ENCODE measurements at regions of chr1 and their contacts with region 1.

Region 1: DNA sequence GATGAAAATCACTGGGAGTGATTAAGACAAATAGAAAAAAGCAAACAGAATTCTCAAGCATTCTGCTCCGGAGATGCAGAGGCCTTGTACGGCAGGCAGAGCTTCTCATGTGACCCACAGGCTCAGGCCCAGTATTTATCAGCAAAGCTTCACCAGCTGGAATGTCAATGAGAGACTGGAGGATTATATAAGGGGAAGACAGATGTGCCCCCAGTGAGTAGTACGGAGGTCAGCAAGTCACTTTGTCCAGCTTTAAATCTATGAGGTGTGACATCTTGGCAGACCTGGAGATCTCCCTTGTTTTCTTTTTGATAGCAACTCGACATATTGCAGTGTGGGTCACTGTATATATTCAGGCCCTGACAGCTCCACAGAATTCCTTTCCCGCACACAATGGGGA is 106.8 kb downstream of the HHIPL2 start:
- DNase-seq: no peak
- ATAC-seq: no peak
- H3K4me3 ChIP-seq: no peak overlapping the region
- H3K27ac ChIP-seq: no peak overlapping the region
- H3K4me1 ChIP-seq: no peaks in the 10 kb centered on the region
- H3K27me3 ChIP-seq: no peaks in the 10 kb centered on the region
- CTCF ChIP-seq: no peak
- POLR2A ChIP-seq: no peak

Region 2: DNA sequence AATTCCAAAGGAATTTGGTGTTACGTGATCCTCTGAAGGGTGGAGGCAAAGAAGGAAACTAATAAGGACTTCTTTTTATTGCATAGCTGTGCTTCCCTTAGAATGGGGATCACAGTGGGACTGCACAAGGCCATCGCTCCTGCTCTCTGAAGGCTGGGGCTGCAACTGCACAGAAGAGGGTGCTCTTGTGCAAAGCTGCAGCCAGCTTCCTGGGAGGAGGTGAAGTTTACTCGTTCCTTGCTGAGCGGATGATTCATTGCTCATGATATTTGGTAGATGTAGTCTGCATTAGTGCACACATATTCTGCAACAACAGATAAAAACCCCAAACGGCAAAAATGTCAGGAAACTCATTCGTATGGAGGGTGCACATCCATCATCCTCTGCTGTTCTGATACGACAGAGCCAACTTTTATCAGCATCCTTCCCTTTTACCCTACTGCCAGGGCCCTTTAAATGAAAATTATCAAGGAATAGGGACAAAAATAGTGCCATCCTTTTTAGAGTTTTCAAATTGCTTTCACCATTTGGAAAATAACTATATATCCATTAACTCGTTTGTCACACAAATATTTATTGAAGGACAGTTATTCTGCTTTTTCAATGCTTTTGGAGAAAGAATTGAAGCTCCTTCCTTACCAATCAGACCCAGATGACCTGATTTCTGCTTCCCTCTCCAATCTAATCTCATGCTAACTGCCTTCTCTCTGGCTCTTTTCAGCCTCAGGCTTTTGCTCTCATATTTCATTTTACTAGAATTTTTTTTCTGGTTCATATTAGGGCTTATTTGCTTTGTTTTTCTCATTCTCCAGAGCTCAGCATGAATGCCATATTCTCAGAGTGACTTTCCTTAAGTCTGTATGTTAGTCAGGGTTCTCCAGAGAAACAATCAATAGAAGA is 962.8 kb before region 1 on chr1:
- in situ Hi-C with region 1: loop called in 2 of 4 experiments (anchors 25 kb)
- intact Hi-C with region 1: no loop called
- DNase-seq: peak; percentile 22 to 25
- ATAC-seq: peak; percentile 78 to 82
- H3K4me3 ChIP-seq: no peak overlapping the region
- H3K27ac ChIP-seq: no peak overlapping the region
- H3K4me1 ChIP-seq: no peaks in the 10 kb centered on the region
- H3K27me3 ChIP-seq: no peaks in the 10 kb centered on the region
- CTCF ChIP-seq: peak in 2 of 5 experiments; percentile 31 to 64
- POLR2A ChIP-seq: no peak

Region 3: GRCh38 chr1:222617367-222617951 is 176.4 kb after region 1 on chr1:
- in situ Hi-C with region 1: no loop called
- intact Hi-C with region 1: no loop called
- DNase-seq: peak; percentile 80 to 82
- ATAC-seq: peak; percentile 91 to 93
- H3K4me3 ChIP-seq: peak overlapping the region; percentile 61 to 73 (median 68)
- H3K27ac ChIP-seq: peak overlapping the region; percentile 52 to 71 (median 62)
- H3K4me1 ChIP-seq: peaks cover 12 to 13% of the 10 kb centered on the region in 2 donors
- H3K27me3 ChIP-seq: no peaks in the 10 kb centered on the region
- CTCF ChIP-seq: no peak
- POLR2A ChIP-seq: no peak

Measured in gastrocnemius medialis (tissue), 4 donors.